Vagina (tissue), 2 donors: ENCODE measurements at regions of chr3 and their contacts with region 1.

Region 1: DNA sequence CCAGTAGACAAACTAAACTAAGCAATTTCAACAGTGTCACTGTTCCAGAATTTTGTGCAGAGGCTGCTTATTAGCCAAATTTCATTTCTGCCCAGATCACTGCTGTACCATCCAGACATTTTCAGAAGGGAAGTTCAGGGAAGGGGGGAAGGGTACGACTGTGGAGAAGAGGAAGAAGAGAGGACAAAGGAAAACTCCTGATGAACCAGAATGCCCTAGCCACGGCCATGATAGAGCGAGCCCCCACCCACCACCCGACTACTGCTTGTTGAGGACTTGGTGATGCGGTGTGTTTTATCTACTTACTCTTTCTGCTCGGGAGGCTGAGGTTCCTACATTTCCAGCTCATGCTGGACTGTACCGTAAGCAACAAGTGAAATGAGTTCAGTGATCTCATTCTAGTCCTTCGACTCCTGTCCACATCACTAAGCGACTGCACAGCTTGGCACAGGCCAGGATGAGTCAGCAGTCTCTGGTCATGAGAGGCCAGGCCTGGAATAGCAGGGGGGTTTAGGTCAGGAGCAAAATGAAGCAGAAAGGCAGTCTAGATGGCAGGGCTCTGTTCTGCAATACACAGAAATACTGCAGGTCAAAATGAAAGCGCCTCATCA is 330.8 kb downstream of the TIGIT start:
- DNase-seq: peak in 1 of 2 donors; percentile 98
- H3K4me3 ChIP-seq: peak overlapping the region; percentile 45 to 53
- H3K27ac ChIP-seq: peak overlapping the region; percentile 93
- H3K4me1 ChIP-seq: peaks cover 56% of the 10 kb centered on the region
- H3K27me3 ChIP-seq: no peaks in the 10 kb centered on the region
- CTCF ChIP-seq: no peak
- POLR2A ChIP-seq: peak in 1 of 2 donors; percentile 31

Region 2: DNA sequence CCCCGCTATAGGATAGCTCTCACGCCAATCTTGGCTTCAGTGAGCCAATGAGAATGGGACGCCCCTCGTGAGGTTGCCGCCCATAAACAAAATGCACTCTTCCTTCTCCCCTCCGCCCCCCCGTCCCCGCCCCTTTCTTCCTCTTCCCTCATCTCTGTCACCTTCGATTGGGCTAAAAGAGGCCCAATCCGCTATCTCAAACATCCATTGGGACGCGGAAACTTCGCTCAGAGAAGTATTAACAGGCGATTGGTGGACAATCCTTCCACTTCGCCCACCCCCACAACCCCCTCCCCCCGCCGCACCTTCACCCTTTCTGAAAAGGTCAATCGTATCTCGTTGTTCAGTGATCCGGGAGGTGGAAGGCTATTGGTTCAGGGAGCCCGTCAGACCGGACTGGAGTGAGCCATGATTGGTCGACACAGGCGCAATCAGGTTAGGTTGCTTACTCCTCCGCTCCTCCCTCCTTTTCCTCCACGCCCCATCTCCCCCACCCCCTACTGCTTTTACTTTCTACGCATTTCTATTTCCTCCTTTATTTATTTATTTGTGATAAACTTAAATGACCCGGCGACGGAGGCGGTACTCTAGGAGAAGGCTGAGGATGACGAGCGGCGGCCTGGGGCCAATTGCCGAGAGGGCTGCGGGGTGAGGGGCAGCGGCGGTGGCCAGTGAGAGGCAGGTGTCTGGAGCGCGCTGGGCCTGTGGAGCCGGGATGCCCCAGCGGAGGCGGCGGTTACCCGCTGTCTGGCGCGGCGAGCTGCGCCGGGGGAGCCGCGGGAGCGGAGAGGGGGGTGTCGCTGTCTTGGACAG is 522.9 kb after region 1 on chr3:
- intact Hi-C with region 1: loop called (anchors 10 kb)
- DNase-seq: peak; percentile 99 to 100
- H3K4me3 ChIP-seq: peak overlapping the region; percentile 80 to 85
- H3K27ac ChIP-seq: peak overlapping the region; percentile 99
- H3K4me1 ChIP-seq: peaks cover 16% of the 10 kb centered on the region
- H3K27me3 ChIP-seq: no peaks in the 10 kb centered on the region
- CTCF ChIP-seq: no peak
- POLR2A ChIP-seq: peak; percentile 15 to 34